Activated B cell treated with CpG ODN at 0.5 μM for 24 hours (primary cell): ENCODE measurements at regions of chr9 and their contacts with region 1.

Region 1: GRCh38 chr9:97921959-97922724 is at the start of gene TRMO:
- DNase-seq: peak; percentile 97
- ATAC-seq: peak; percentile 74
- H3K4me3 Mint-ChIP-seq: peak within 1 kb of the TSS; percentile 85
- H3K27ac Mint-ChIP-seq: peak within 1 kb of the TSS; percentile 95
- H3K4me1 Mint-ChIP-seq: peaks cover 57% of the 10 kb centered on the region
- H3K27me3 Mint-ChIP-seq: peaks cover 2% of the 10 kb centered on the region
- CTCF ChIP-seq: no peak
- total RNA-seq, gene TRMO: 25.3 and 32.4 TPM in 2 replicates

Region 2: GRCh38 chr9:97411789-97412625 is 510.1 kb before region 1 on chr9 and contains the start of gene TDRD7:
- CTCF ChIA-PET with region 1: no interaction called
- POLR2A ChIA-PET with region 1: interaction called, 3 read pairs
- intact Hi-C with region 1: loop called (anchors 5 kb)
- DNase-seq: peak; percentile 94
- ATAC-seq: peak; percentile 90
- H3K4me3 Mint-ChIP-seq: peak within 1 kb of the TSS; percentile 87
- H3K27ac Mint-ChIP-seq: peak within 1 kb of the TSS; percentile 78
- H3K4me1 Mint-ChIP-seq: peaks cover 38% of the 10 kb centered on the region
- H3K27me3 Mint-ChIP-seq: peaks cover 5% of the 10 kb centered on the region
- CTCF ChIP-seq: peak; percentile 43
- total RNA-seq, gene TDRD7: 13.7 and 14.7 TPM in 2 replicates

Region 3: DNA sequence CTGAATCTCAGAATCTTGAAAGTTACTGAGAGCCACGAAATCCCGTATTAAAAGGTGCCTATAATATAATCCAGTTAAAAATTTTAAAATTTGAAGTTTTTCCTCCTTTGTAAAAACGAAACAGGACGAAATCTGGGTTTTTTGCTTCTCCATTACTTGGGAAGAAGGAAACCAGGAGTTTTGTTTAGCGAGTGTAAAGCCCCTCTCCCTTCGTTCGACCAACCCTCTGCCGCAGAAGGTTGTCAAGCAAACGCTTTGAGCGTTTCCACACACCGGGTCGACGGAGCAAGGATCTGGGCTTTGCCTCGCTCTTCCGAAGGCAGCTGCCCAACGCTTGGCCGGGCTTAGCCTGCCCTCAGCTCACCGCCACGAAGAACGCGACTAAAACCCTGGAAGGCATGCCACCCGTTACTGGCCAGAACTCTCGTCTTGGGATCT is 70.7 kb before region 1 on chr9:
- CTCF ChIA-PET with region 1: no interaction called
- POLR2A ChIA-PET with region 1: no interaction called
- intact Hi-C with region 1: no loop called
- DNase-seq: no peak
- ATAC-seq: no peak
- H3K4me3 Mint-ChIP-seq: no peak overlapping the region
- H3K27ac Mint-ChIP-seq: no peak overlapping the region
- H3K4me1 Mint-ChIP-seq: peaks cover 36% of the 10 kb centered on the region
- H3K27me3 Mint-ChIP-seq: peaks cover 67% of the 10 kb centered on the region
- CTCF ChIP-seq: no peak

Region 4: GRCh38 chr9:97900738-97901565 is 21.2 kb before region 1 on chr9:
- CTCF ChIA-PET with region 1: interaction called, 11 read pairs
- POLR2A ChIA-PET with region 1: interaction called, 16 read pairs
- intact Hi-C with region 1: no loop called
- DNase-seq: no peak
- ATAC-seq: no peak
- H3K4me3 Mint-ChIP-seq: no peak overlapping the region
- H3K27ac Mint-ChIP-seq: no peak overlapping the region
- H3K4me1 Mint-ChIP-seq: peaks cover 21% of the 10 kb centered on the region
- H3K27me3 Mint-ChIP-seq: no peaks in the 10 kb centered on the region
- CTCF ChIP-seq: no peak

Region 5: GRCh38 chr9:98010445-98010844 is 88.3 kb after region 1 on chr9:
- CTCF ChIA-PET with region 1: interaction called, 4 read pairs
- POLR2A ChIA-PET with region 1: interaction called, 5 read pairs
- intact Hi-C with region 1: loop called (anchors 1 kb)
- DNase-seq: no peak
- ATAC-seq: peak; percentile 96
- H3K4me3 Mint-ChIP-seq: no peak overlapping the region
- H3K27ac Mint-ChIP-seq: peak overlapping the region; percentile 24
- H3K4me1 Mint-ChIP-seq: peaks cover 21% of the 10 kb centered on the region
- H3K27me3 Mint-ChIP-seq: no peaks in the 10 kb centered on the region
- CTCF ChIP-seq: no peak

Region 6: GRCh38 chr9:98074115-98074990 is 152.2 kb after region 1 on chr9:
- CTCF ChIA-PET with region 1: interaction called, 3 read pairs
- POLR2A ChIA-PET with region 1: no interaction called
- intact Hi-C with region 1: loop called (anchors 1 kb)
- DNase-seq: peak; percentile 58
- ATAC-seq: peak; percentile 61
- H3K4me3 Mint-ChIP-seq: no peak overlapping the region
- H3K27ac Mint-ChIP-seq: peak overlapping the region; percentile 24
- H3K4me1 Mint-ChIP-seq: peaks cover 6% of the 10 kb centered on the region
- H3K27me3 Mint-ChIP-seq: no peaks in the 10 kb centered on the region
- CTCF ChIP-seq: peak; percentile 91

Region 7: GRCh38 chr9:98206754-98207153 is 284.6 kb after region 1 on chr9:
- CTCF ChIA-PET with region 1: interaction called, 3 read pairs
- POLR2A ChIA-PET with region 1: no interaction called
- intact Hi-C with region 1: loop called (anchors 1 kb)
- DNase-seq: no peak
- ATAC-seq: no peak
- H3K4me3 Mint-ChIP-seq: no peak overlapping the region
- H3K27ac Mint-ChIP-seq: no peak overlapping the region
- H3K4me1 Mint-ChIP-seq: peaks cover 8% of the 10 kb centered on the region
- H3K27me3 Mint-ChIP-seq: no peaks in the 10 kb centered on the region
- CTCF ChIP-seq: no peak

Region 8: DNA sequence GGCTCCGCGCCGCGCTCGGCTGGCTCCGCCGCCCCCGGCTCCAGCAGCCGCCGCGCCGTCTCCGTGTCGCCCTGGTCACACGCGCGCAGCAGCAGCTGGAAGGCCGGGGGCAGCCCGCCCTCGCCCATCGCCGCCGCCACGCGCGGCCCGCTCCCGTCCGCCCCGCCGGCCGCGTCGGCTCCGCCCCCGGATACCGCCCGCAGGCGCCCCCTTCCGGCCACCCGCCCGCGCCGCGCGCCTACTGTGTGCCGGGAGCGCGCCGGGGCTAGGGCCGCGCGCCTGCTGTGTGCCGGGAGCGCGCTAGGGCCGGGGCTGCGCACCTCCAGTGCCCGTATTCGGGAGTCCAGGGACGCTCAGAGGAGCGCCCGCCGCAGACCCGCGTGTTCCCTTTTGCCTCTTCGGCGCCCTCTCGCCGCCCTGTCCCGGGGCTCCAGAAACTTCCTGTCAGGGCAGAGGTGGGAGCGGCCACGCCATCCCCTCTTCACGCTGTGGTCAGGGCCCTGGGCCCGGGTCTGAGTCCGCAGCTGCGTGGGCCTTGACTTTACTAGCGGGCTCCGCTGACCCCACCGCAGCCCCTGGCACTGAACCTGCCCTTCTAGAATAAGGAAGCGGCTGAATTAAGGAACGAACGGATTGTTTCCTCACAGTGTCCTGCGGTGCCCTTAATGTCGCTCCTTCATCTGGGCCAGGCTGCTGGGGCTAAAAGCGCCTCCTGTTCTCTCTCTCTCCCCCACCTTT is 874.4 kb after region 1 on chr9 and contains the start of gene ANKS6:
- CTCF ChIA-PET with region 1: no interaction called
- POLR2A ChIA-PET with region 1: interaction called, 4 read pairs
- intact Hi-C with region 1: loop called (anchors 2 kb)
- DNase-seq: peak; percentile 91
- ATAC-seq: peak; percentile 94
- H3K4me3 Mint-ChIP-seq: peak within 1 kb of the TSS; percentile 87
- H3K27ac Mint-ChIP-seq: peak within 1 kb of the TSS; percentile 47
- H3K4me1 Mint-ChIP-seq: peaks cover 16% of the 10 kb centered on the region
- H3K27me3 Mint-ChIP-seq: peaks cover 1% of the 10 kb centered on the region
- CTCF ChIP-seq: no peak
- total RNA-seq, gene ANKS6: 12.1 and 14.8 TPM in 2 replicates